GM12878 (cell line): ENCODE measurements at regions of chr7 and their contacts with region 1.

Region 1: DNA sequence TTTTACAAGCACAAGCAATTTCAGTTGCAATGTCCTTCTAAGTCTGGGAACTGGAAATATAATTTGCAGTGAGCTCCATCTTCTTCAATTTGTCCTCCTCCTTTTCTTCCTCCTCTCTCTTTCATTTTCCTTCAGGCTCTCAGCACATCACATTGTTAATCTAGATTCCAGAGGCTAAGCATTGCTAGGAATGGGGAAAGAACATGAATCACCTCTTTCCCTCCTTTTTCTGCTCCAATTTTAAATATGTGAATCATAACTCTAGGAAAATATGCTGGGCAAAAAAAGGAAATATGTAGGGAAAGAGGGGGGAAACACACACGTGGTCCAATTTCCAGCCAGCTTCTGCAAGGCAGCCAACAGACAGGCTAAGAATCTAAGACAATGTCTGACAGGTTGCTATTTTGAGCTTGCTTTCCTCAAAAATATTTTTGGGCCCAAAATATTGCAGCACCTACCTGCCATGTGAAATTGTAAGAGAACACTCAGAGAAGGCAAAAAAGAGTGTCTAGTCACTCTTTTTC is 72.7 kb upstream of the NUPR2 start:
- DNase-seq: no peak
- ATAC-seq: no peak
- H3K4me3 ChIP-seq: no peak overlapping the region
- H3K27ac ChIP-seq: no peak overlapping the region
- H3K4me1 ChIP-seq: no peaks in the 10 kb centered on the region
- H3K27me3 ChIP-seq: no peaks in the 10 kb centered on the region
- CTCF ChIP-seq: no peak
- EP300 ChIP-seq: no peak
- POLR2A ChIP-seq: no peak
- RAD21 ChIP-seq: no peak

Region 2: DNA sequence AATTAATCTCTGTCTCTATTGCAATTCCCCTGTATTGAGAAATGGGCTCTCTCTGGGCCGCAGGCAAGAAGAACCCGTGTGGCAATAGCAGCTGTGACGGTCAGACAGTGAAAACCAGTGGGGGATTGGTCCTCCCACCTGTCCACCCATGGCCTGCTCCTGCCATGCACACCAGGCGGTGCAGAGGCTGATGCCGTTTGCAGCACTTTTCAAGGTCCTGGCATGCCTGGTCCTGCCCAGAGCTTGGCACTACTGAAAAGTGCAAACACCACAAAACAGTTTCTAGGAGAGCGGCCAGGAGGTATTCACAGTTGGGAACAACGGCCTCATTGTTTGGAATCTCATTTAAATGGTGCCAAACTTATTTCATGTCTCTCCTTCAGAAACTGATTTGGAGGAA is 179.2 kb before region 1 on chr7:
- CTCF ChIA-PET with region 1: no interaction called
- POLR2A ChIA-PET with region 1: no interaction called
- RAD21 ChIA-PET with region 1: no interaction called
- SMC1A ChIA-PET with region 1: no interaction called
- in situ Hi-C with region 1: no loop called
- intact Hi-C with region 1: no loop called
- DNase-seq: no peak
- ATAC-seq: no peak
- H3K4me3 ChIP-seq: no peak overlapping the region
- H3K27ac ChIP-seq: no peak overlapping the region
- H3K4me1 ChIP-seq: no peaks in the 10 kb centered on the region
- H3K27me3 ChIP-seq: no peaks in the 10 kb centered on the region
- CTCF ChIP-seq: no peak
- EP300 ChIP-seq: no peak
- POLR2A ChIP-seq: no peak
- RAD21 ChIP-seq: no peak

Region 3: GRCh38 chr7:56121440-56121839 is 67.4 kb before region 1 on chr7:
- CTCF ChIA-PET with region 1: no interaction called
- POLR2A ChIA-PET with region 1: no interaction called
- RAD21 ChIA-PET with region 1: no interaction called
- SMC1A ChIA-PET with region 1: no interaction called
- in situ Hi-C with region 1: no loop called
- intact Hi-C with region 1: loop called (anchors 10 kb)
- DNase-seq: no peak
- ATAC-seq: no peak
- H3K4me3 ChIP-seq: no peak overlapping the region
- H3K27ac ChIP-seq: no peak overlapping the region
- H3K4me1 ChIP-seq: no peaks in the 10 kb centered on the region
- H3K27me3 ChIP-seq: no peaks in the 10 kb centered on the region
- CTCF ChIP-seq: no peak
- EP300 ChIP-seq: no peak
- POLR2A ChIP-seq: no peak
- RAD21 ChIP-seq: no peak